ENCODE measurements at regions of chr15 and their contacts with region 1.

Region 1: DNA sequence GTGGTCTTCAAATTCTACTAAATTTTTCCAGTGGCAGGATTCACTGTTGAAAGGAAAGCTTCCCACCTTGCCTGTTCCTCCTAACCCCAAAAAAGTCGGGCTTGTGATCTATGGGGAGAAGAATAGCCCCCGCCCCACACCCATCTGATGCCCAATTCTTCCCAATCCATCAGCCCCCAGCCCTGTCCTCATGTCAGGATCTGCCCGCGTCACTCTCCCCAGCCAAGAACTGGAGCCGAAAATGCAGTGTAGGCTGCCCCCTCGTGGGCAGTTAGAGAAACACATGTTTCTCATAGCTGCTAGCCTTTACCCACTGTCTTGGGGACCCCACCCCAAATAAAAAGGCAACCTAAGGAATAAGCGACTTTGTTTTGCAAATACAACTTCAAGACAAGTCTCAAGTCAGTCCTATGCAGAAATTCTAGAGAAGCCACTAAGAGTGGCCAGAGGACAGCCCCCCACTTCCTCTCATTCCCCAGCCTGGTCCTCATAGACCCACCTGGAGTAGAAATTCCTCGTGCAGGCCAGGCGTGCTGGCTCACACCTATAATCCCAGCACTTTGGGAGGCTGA is 13.0 kb upstream of the CSK start:
- DNase-seq: no peak
- ATAC-seq: peak; percentile 53
- H3K4me3 Mint-ChIP-seq: no peak overlapping the region
- H3K27ac Mint-ChIP-seq: no peak overlapping the region
- H3K4me1 Mint-ChIP-seq: peaks cover 37% of the 10 kb centered on the region
- H3K27me3 Mint-ChIP-seq: no peaks in the 10 kb centered on the region
- CTCF ChIP-seq: peak; percentile 53

Region 2: DNA sequence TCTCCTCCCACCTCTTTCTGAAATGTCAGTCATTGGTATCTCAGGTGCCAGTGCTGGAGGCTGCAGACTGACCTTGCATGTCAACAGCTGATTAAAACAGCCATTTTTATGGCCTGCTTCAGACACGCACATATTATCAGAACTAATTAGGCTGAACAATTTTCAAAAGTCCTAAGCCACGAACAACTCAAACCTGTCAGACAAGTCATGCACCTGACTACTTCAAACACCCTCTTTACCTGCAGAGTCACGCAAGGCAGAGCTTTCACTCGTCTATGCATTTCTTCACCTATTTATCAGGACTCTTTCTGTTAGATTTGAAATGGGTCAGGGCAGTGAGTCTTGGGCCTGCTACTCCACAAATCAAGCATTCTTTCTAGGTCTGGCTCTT is 126.5 kb before region 1 on chr15:
- CTCF ChIA-PET with region 1: interaction called, 200 read pairs
- POLR2A ChIA-PET with region 1: no interaction called
- intact Hi-C with region 1: no loop called
- DNase-seq: no peak
- ATAC-seq: no peak
- H3K4me3 Mint-ChIP-seq: no peak overlapping the region
- H3K27ac Mint-ChIP-seq: no peak overlapping the region
- H3K4me1 Mint-ChIP-seq: no peaks in the 10 kb centered on the region
- H3K27me3 Mint-ChIP-seq: no peaks in the 10 kb centered on the region
- CTCF ChIP-seq: no peak

Region 3: GRCh38 chr15:74781431-74782258 is 12.8 kb after region 1 on chr15 and contains the start of gene CSK:
- CTCF ChIA-PET with region 1: interaction called, 1,146 read pairs
- POLR2A ChIA-PET with region 1: interaction called, 2,569 read pairs
- intact Hi-C with region 1: loop called (anchors 1 kb)
- DNase-seq: peak; percentile 90
- ATAC-seq: peak; percentile 42
- H3K4me3 Mint-ChIP-seq: peak within 1 kb of the TSS; percentile 94
- H3K27ac Mint-ChIP-seq: peak within 1 kb of the TSS; percentile 99
- H3K4me1 Mint-ChIP-seq: peaks cover 81% of the 10 kb centered on the region
- H3K27me3 Mint-ChIP-seq: no peaks in the 10 kb centered on the region
- CTCF ChIP-seq: no peak
- total RNA-seq, gene CSK: 540 and 557 TPM in 2 replicates

Region 4: DNA sequence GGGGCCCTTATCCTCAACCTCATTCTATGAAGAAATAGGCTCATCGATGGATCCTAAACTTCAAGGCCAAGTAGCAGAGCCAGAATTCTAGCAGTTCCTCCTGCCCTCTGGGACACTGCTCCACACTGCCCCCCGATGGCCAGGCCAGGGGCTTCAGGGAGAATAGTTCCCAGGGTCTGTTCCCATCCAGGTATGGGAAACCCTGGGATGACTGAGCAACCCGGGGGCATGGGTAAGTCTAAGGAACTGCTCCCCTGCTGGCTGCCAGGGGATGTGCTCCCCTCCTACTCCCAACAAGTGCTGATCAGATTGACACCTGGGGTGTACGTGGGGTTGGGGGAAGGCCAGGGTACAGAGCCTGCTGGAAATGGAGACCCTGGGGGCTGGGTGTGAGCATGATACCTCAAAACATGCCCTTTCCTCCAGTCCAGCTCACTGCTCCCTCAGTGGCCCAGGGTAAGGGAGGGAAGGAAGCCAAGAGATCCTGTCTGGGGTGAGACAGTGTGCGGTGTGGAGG is 66.5 kb after region 1 on chr15:
- CTCF ChIA-PET with region 1: interaction called, 13 read pairs
- POLR2A ChIA-PET with region 1: interaction called, 4 read pairs
- intact Hi-C with region 1: loop called (anchors 2 kb)
- DNase-seq: peak; percentile 47
- ATAC-seq: peak; percentile 71
- H3K4me3 Mint-ChIP-seq: no peak overlapping the region
- H3K27ac Mint-ChIP-seq: no peak overlapping the region
- H3K4me1 Mint-ChIP-seq: peaks cover 11% of the 10 kb centered on the region
- H3K27me3 Mint-ChIP-seq: no peaks in the 10 kb centered on the region
- CTCF ChIP-seq: no peak

Region 5: DNA sequence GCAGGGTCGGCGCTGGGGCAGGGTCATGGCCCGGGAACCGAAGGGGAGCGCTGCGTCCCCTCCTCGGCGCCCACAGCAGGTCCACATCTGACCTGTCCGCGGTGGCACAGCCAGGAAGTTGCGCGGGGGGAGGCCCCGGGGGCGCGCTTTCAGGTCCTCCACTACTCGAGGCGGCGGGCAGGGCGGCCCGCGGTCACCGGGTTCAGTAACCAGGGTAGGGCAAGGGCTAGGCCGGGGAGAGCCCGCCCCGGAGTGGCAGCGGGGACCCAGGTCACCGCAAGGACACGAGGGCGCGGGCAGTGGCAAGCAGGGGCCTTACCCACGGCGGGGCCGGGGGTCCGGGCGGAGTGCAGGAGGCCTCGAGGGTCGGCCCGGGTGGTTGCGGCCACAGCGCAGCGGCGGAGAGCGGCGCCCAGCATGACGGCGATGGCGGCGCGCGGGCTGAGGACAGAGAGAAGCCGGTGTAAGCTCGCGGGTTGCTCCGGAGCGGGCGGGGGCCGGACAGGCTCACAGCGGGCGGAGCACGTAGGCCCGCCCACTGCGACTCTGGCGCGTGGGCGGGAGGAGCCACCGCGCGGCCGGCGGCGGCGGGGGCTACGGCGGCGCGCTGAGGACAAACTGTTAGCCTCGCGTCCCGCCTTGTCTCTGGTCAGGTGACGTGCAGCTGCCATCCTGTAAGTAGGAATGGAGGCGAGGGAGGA is 168.9 kb after region 1 on chr15 and contains the start of gene COX5A:
- CTCF ChIA-PET with region 1: no interaction called
- POLR2A ChIA-PET with region 1: interaction called, 4 read pairs
- intact Hi-C with region 1: loop called (anchors 1 kb)
- DNase-seq: peak; percentile 86
- ATAC-seq: peak; percentile 97
- H3K4me3 Mint-ChIP-seq: peak within 1 kb of the TSS; percentile 86
- H3K27ac Mint-ChIP-seq: peak within 1 kb of the TSS; percentile 90
- H3K4me1 Mint-ChIP-seq: peaks cover 34% of the 10 kb centered on the region
- H3K27me3 Mint-ChIP-seq: no peaks in the 10 kb centered on the region
- CTCF ChIP-seq: no peak
- total RNA-seq, gene COX5A: 150 and 159 TPM in 2 replicates

Measured in activated B cell treated with CpG ODN at 0.5 μM for 24 hours (primary cell).